OCI-LY7 (cell line): ENCODE measurements at regions of chrX and their contacts with region 1.

Region 1: GRCh38 chrX:39814391-39814790 is 283.4 kb downstream of the BCOR start:
- DNase-seq: peak; percentile 53
- H3K4me3 ChIP-seq: no peak overlapping the region
- H3K27ac ChIP-seq: no peak overlapping the region
- H3K4me1 ChIP-seq: peaks cover 16% of the 10 kb centered on the region
- CTCF ChIP-seq: peak; percentile 74

Region 2: GRCh38 chrX:39652336-39653131 is 161.9 kb before region 1 on chrX:
- CTCF ChIA-PET with region 1: no interaction called
- POLR2A ChIA-PET with region 1: no interaction called
- intact Hi-C with region 1: loop called (anchors 10 kb)
- DNase-seq: peak; percentile 56
- H3K4me3 ChIP-seq: no peak overlapping the region
- H3K27ac ChIP-seq: no peak overlapping the region
- H3K4me1 ChIP-seq: no peaks in the 10 kb centered on the region
- CTCF ChIP-seq: peak; percentile 69

Region 3: GRCh38 chrX:39730662-39731397 is 83.6 kb before region 1 on chrX:
- CTCF ChIA-PET with region 1: no interaction called
- POLR2A ChIA-PET with region 1: interaction called, 3 read pairs
- intact Hi-C with region 1: loop called (anchors 2 kb)
- DNase-seq: peak; percentile 65
- H3K4me3 ChIP-seq: no peak overlapping the region
- H3K27ac ChIP-seq: no peak overlapping the region
- H3K4me1 ChIP-seq: peaks cover 21% of the 10 kb centered on the region
- CTCF ChIP-seq: peak; percentile 80